Adrenal gland (tissue), 19 donors: ENCODE measurements at regions of chr22 and their contacts with region 1.

Region 1: DNA sequence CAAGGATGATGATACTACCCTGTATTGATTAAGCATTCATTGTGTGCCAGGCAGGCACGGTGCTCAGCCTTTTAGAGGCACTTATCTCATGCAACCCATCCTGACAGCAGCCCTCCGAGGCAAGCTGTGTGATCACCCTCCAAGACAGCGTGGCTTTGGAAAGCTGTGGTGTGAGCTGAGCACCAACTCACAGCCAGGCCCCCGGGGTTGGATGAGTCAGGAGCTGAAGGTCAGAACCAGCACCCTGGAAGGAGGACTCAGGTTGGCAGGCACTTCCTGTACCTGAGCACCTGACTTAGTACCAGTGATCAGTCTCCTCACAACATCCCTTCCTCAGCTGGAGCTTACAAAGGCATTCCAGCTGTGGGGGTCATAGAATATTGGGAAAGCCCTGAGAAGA is 9.0 kb downstream of the PATZ1 start:
- DNase-seq: peak in 6 of 7 donors; percentile 72 to 85 (median 74)
- H3K4me3 ChIP-seq: no peak overlapping the region
- H3K27ac ChIP-seq: peak overlapping the region in 3 of 5 donors; percentile 26 to 52 (median 41)
- H3K4me1 ChIP-seq: peaks cover 0 to 6% of the 10 kb centered on the region in 2 donors
- H3K27me3 ChIP-seq: no peaks in the 10 kb centered on the region
- CTCF ChIP-seq: no peak
- POLR2A ChIP-seq: no peak

Region 2: DNA sequence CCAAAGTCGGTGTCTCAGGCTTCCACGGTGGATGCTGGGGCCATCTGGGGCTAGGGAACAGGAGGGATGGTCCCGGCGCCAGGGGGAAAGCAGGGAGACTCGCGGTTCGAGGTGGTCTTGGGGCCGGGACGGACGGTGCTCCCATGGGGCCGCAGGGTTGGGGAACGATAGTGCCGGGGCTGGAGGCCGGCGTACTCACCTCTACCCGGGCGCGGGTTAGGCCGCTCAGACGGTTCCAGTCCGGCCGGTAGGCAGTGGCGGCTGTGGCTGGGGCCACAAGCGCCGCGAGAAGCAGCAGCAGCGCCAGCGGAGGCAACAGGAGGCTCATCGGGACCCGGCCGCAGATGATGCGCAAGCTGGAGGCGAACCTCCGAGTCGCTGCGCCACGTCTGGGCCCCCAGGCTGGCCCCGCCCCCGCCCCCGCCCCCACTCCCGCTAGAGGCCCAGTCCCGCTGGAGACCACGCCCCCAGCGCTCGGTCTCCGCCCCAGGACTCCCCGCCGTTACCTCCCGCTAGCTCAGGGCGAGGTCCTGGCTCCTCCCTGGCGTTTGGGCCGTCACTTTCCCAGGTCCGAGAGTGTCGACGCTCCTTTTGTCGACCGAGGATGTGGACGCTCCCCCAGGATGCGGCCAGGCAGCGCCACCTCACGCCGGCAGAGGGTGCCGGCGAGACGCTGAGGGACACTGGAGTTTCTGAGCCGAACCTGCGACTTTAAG is 229.8 kb before region 1 on chr22 and contains the start of gene SELENOM:
- intact Hi-C with region 1: no loop called
- DNase-seq: peak; percentile 94 to 98 (median 97)
- H3K4me3 ChIP-seq: peak within 1 kb of the TSS in 3 of 4 donors; percentile 7 to 64 (median 29)
- H3K27ac ChIP-seq: peak within 1 kb of the TSS in 4 of 5 donors; percentile 70 to 95 (median 86)
- H3K4me1 ChIP-seq: peaks cover 3 to 19% of the 10 kb centered on the region in 2 donors
- H3K27me3 ChIP-seq: no peaks in the 10 kb centered on the region
- CTCF ChIP-seq: peak; percentile 86 to 98 (median 94)
- POLR2A ChIP-seq: peak; percentile 70 to 85
- total RNA-seq, gene SELENOM: 6.6 to 546 (median 108) TPM

Region 3: GRCh38 chr22:31122532-31123291 is 214.4 kb before region 1 on chr22 and contains the start of gene INPP5J:
- intact Hi-C with region 1: no loop called
- DNase-seq: peak; percentile 56 to 82 (median 73)
- H3K4me3 ChIP-seq: peak within 1 kb of the TSS in 2 of 4 donors; percentile 8 to 35
- H3K27ac ChIP-seq: peak within 1 kb of the TSS in 1 of 5 donors; percentile 5
- H3K4me1 ChIP-seq: peaks cover 12 to 19% of the 10 kb centered on the region in 2 donors
- H3K27me3 ChIP-seq: no peaks in the 10 kb centered on the region
- CTCF ChIP-seq: no peak
- POLR2A ChIP-seq: no peak
- total RNA-seq, gene INPP5J: 0.48 to 8.1 (median 2.4) TPM

Region 4: GRCh38 chr22:31272522-31273446 is 64.4 kb before region 1 on chr22:
- intact Hi-C with region 1: loop called in 1 of 2 experiments (anchors 10 kb)
- DNase-seq: peak in 6 of 7 donors; percentile 58 to 85 (median 72)
- H3K4me3 ChIP-seq: no peak overlapping the region
- H3K27ac ChIP-seq: no peak overlapping the region
- H3K4me1 ChIP-seq: no peaks in the 10 kb centered on the region
- H3K27me3 ChIP-seq: no peaks in the 10 kb centered on the region
- CTCF ChIP-seq: peak; percentile 63 to 82 (median 73)
- POLR2A ChIP-seq: no peak